ENCODE measurements at regions of chr11 and their contacts with region 1.

Region 1: GRCh38 chr11:65111744-65112414 is at the start of gene TM7SF2:
- DNase-seq: peak; percentile 97
- H3K4me3 Mint-ChIP-seq: peak within 1 kb of the TSS; percentile 86
- H3K27ac Mint-ChIP-seq: peak within 1 kb of the TSS; percentile 92
- H3K4me1 Mint-ChIP-seq: peaks cover 51% of the 10 kb centered on the region
- H3K27me3 Mint-ChIP-seq: no peaks in the 10 kb centered on the region
- total RNA-seq, gene TM7SF2: 26.1 to 27.7 TPM

Region 2: GRCh38 chr11:64976651-64977050 is 135.2 kb before region 1 on chr11:
- CTCF ChIA-PET with region 1: no interaction called
- POLR2A ChIA-PET with region 1: no interaction called
- DNase-seq: no peak
- H3K4me3 Mint-ChIP-seq: no peak overlapping the region
- H3K27ac Mint-ChIP-seq: no peak overlapping the region
- H3K4me1 Mint-ChIP-seq: peaks cover 11% of the 10 kb centered on the region
- H3K27me3 Mint-ChIP-seq: peaks cover 3% of the 10 kb centered on the region

Region 3: DNA sequence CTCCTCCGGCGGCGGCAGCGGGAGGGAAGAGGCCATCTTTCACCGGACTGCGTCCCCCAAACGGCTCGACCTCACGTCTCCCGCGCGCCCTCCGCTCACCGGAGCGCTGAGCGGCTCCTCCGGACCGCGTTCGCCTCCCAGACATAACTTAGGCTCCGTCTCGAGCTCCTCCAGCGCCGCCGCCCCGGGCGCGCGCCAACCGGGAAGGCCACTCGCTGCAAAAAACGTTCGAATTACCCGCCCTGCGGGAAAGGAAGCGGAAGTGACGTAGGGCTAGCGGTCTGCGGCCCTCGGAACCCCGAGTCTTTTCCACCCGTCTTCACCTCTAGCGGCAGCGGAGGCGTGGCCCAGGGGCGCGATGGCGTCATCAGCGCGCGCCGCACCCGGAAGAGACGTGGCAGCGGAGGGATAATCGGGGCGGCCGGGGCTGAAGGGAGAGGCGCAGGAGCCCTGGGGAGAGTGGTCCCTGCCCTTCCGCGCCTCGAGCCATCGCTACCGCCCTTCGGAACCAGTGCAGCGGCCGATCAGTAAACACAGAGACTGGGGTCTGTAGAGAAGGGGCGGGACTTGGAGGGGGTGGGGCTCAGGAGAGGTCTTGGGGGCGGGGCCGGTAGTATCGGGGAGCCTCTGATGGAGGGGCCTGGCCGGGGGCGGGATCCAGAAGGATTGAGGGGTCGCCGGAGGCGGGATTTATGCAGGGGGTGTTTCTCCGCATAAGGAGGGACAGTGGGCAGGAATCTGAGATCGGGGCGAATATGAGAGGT is 27.9 kb before region 1 on chr11 and contains the starts of genes CDCA5 and ZFPL1:
- CTCF ChIA-PET with region 1: interaction called, 24 read pairs
- POLR2A ChIA-PET with region 1: no interaction called
- DNase-seq: peak; percentile 97
- H3K4me3 Mint-ChIP-seq: peak within 1 kb of the TSS; percentile 98
- H3K27ac Mint-ChIP-seq: peak within 1 kb of the TSS; percentile 99
- H3K4me1 Mint-ChIP-seq: peaks cover 51% of the 10 kb centered on the region
- H3K27me3 Mint-ChIP-seq: no peaks in the 10 kb centered on the region
- total RNA-seq, gene CDCA5: 105 to 109 TPM
- total RNA-seq, gene ZFPL1: 27.2 to 29.8 TPM

Region 4: GRCh38 chr11:65095974-65096806 is 15.7 kb before region 1 on chr11 and contains the start of gene VPS51:
- CTCF ChIA-PET with region 1: interaction called, 85 read pairs
- POLR2A ChIA-PET with region 1: no interaction called
- DNase-seq: peak; percentile 90
- H3K4me3 Mint-ChIP-seq: peak within 1 kb of the TSS; percentile 93
- H3K27ac Mint-ChIP-seq: peak within 1 kb of the TSS; percentile 98
- H3K4me1 Mint-ChIP-seq: peaks cover 25% of the 10 kb centered on the region
- H3K27me3 Mint-ChIP-seq: no peaks in the 10 kb centered on the region
- total RNA-seq, gene VPS51: 146 to 148 TPM